Posterior vena cava (tissue), 2 donors: ENCODE measurements at regions of chr3 and their contacts with region 1.

Region 1: GRCh38 chr3:9746330-9746729 is 3.4 kb upstream of the OGG1 start:
- DNase-seq: no peak

Region 2: DNA sequence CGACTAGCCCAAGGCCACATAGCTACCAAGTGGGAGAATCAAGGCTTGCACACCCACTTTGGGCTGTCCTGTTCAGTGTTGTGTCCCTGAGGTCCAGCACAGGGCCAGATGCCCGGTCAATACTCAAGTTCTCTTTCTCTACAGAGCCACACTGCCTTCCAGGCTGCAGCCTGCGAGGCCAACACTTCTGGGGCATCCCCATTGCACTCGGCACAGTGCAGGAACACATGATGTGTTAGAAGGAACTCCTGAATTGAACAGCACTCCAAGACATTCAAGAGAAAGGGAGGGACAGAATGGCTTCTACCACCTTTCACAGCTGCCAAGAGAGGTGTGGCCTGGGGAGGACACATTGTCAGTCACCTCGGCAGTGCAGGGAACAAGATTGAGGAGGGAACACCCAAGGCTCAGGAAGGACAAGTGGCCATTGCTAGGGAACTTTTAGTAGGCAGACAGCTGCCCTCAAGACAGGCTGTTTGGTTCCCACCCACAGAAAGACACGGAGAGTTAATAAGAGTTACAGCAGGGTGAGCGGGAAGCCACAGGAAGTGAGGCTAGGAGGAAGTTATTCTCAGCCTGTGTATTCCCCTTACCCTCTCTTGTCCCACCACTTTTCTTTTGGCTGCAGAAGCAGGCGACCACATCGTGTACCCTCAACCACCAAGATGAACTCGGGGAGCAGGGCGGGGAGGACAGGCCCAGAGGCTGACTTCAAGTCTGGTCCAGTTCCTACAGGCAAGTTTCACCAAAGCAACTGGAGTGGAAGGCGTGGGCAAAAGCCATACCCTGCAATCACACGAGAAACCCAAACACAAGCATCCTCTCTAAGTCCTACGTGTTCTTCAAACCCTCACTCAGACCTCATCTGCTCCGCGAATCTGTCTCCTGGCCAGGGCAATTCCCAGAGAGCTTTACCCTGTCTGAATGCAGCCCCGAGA is 566.2 kb before region 1 on chr3:
- intact Hi-C with region 1: no loop called
- DNase-seq: no peak

Region 3: GRCh38 chr3:9731206-9732079 is 14.9 kb before region 1 on chr3 and contains the start of gene BRPF1:
- intact Hi-C with region 1: loop called in 1 of 2 experiments (anchors 2 kb)
- DNase-seq: peak; percentile 100
- total RNA-seq, gene BRPF1: 15.6 to 17.5 TPM